ENCODE measurements at regions of chr5 and their contacts with region 1.

Region 1: GRCh38 chr5:154196955-154197652 is 6.6 kb downstream of the GALNT10 start:
- DNase-seq: no peak
- H3K4me3 Mint-ChIP-seq: no peak overlapping the region
- H3K27ac Mint-ChIP-seq: peak overlapping the region; percentile 85
- H3K4me1 Mint-ChIP-seq: peaks cover 67% of the 10 kb centered on the region
- H3K27me3 Mint-ChIP-seq: no peaks in the 10 kb centered on the region

Region 2: DNA sequence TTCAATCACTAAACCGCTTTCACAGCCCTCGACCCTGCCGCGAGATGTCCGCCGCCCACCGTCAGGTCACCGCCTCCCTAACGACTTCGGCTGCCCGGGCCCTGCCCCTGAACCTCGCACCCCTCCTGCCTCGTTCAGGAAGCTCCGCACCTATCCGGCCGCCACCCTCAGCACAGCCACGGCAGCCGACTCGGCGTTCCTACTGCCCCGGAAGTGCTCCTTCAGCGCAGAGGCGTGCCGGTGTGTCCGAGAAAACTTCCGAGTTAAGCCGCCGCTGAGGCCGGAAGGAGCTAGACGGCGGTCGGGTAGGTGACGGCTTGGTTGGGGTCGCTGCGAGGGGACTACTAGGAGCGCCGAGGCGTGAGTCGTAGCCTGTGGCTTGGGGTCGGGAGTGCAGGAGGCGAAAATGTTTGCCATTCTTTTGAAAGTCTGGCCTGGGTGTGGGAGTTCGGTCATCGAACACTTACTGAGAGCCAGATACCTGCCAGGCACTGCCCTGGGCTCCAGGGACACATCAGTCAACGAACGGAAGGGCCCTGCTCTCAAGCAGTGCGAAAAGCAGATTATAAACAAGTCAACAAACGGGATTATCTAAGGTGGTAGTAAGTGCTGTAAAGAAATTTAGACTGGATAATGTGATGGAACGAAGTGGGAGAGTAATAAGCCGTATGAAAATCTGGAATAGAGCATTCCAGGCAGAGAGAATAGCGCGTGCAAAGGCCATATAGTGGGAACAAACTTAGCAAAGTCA is 158.2 kb before region 1 on chr5 and contains the starts of genes FAM114A2 and MFAP3:
- CTCF ChIA-PET with region 1: no interaction called
- POLR2A ChIA-PET with region 1: interaction called, 12 read pairs
- DNase-seq: peak; percentile 92
- H3K4me3 Mint-ChIP-seq: peak within 1 kb of the TSS; percentile 99
- H3K27ac Mint-ChIP-seq: peak within 1 kb of the TSS; percentile 96
- H3K4me1 Mint-ChIP-seq: peaks cover 49% of the 10 kb centered on the region
- H3K27me3 Mint-ChIP-seq: no peaks in the 10 kb centered on the region
- total RNA-seq, gene FAM114A2: 27.0 to 28.5 TPM
- total RNA-seq, gene MFAP3: 23.5 to 25.5 TPM

Region 3: GRCh38 chr5:154141745-154142221 is 55.3 kb before region 1 on chr5:
- CTCF ChIA-PET with region 1: no interaction called
- POLR2A ChIA-PET with region 1: no interaction called
- DNase-seq: no peak
- H3K4me3 Mint-ChIP-seq: no peak overlapping the region
- H3K27ac Mint-ChIP-seq: no peak overlapping the region
- H3K4me1 Mint-ChIP-seq: no peaks in the 10 kb centered on the region
- H3K27me3 Mint-ChIP-seq: peaks cover 8% of the 10 kb centered on the region

Region 4: GRCh38 chr5:154179846-154180710 is 17.0 kb before region 1 on chr5:
- CTCF ChIA-PET with region 1: interaction called, 20 read pairs
- POLR2A ChIA-PET with region 1: interaction called, 7 read pairs
- DNase-seq: peak; percentile 42
- H3K4me3 Mint-ChIP-seq: no peak overlapping the region
- H3K27ac Mint-ChIP-seq: no peak overlapping the region
- H3K4me1 Mint-ChIP-seq: peaks cover 21% of the 10 kb centered on the region
- H3K27me3 Mint-ChIP-seq: peaks cover 16% of the 10 kb centered on the region

Region 5: DNA sequence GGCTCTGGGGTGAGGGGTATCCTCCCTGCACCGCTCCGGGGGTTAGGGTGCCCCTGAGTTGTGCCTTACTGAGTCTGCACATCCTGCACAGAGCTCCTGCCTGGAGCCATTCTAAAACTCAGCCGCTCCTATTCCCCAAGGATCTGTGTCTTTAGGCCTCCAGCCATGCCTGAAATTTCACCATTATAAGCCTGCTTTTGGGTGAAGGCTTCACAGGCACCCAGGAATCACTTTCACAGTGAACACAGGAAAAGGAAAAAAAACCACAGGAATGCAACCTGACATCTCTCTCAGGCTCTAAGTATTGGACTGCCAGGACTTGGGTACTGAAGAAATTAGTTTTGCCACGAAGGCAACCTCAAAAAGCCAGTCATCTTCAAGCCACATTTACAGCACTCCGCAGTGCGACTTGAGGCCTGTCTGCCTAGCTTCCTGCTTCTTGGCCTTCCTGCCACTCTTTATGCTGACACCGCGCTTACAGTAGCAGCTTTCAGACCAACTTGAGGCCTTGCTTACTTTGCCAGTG is 24.3 kb after region 1 on chr5:
- CTCF ChIA-PET with region 1: interaction called, 9 read pairs
- POLR2A ChIA-PET with region 1: interaction called, 12 read pairs
- DNase-seq: peak; percentile 77
- H3K4me3 Mint-ChIP-seq: no peak overlapping the region
- H3K27ac Mint-ChIP-seq: peak overlapping the region; percentile 85
- H3K4me1 Mint-ChIP-seq: peaks cover 54% of the 10 kb centered on the region
- H3K27me3 Mint-ChIP-seq: no peaks in the 10 kb centered on the region

Region 6: DNA sequence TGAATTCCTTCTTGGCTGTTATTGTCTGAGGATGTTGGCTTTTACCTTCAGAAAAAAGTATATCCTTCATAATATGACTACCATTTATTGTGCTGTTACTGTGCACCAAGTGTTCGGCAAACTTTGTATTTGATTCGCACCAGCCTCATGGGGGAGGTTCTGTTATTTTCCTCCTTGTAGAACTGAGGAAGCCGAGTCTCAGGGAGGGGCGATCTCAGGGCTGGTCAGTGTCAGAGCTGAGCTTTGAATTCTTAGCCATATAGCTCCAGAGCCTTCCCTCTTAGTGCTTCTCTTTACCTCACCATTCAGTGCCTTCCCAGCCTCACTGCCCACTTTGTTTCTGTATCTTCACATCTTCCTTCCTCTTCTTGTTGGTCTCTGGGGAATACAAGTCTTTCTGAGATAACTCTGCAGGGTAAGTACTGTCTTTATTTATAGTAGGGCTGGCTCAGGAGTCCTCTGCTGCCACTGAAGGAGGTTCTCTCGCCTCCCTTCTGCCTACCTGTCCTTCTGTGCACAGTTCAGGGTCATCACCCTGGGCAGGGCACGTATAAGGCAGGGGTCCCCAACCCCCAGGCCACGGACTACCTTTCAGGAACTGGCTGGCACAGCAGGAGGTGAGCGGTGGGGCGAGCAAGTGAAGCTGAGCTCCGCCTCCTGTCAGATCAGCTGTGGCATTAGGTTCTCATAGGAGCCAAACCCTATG is 41.8 kb after region 1 on chr5:
- CTCF ChIA-PET with region 1: interaction called, 44 read pairs
- POLR2A ChIA-PET with region 1: interaction called, 15 read pairs
- DNase-seq: no peak
- H3K4me3 Mint-ChIP-seq: no peak overlapping the region
- H3K27ac Mint-ChIP-seq: no peak overlapping the region
- H3K4me1 Mint-ChIP-seq: peaks cover 26% of the 10 kb centered on the region
- H3K27me3 Mint-ChIP-seq: no peaks in the 10 kb centered on the region

Region 7: GRCh38 chr5:154405078-154405792 is 208.1 kb after region 1 on chr5:
- CTCF ChIA-PET with region 1: interaction called, 48 read pairs
- POLR2A ChIA-PET with region 1: interaction called, 6 read pairs
- DNase-seq: peak; percentile 77
- H3K4me3 Mint-ChIP-seq: no peak overlapping the region
- H3K27ac Mint-ChIP-seq: no peak overlapping the region
- H3K4me1 Mint-ChIP-seq: peaks cover 8% of the 10 kb centered on the region
- H3K27me3 Mint-ChIP-seq: no peaks in the 10 kb centered on the region